ENCODE measurements at regions of chr19 and their contacts with region 1.

Region 1: DNA sequence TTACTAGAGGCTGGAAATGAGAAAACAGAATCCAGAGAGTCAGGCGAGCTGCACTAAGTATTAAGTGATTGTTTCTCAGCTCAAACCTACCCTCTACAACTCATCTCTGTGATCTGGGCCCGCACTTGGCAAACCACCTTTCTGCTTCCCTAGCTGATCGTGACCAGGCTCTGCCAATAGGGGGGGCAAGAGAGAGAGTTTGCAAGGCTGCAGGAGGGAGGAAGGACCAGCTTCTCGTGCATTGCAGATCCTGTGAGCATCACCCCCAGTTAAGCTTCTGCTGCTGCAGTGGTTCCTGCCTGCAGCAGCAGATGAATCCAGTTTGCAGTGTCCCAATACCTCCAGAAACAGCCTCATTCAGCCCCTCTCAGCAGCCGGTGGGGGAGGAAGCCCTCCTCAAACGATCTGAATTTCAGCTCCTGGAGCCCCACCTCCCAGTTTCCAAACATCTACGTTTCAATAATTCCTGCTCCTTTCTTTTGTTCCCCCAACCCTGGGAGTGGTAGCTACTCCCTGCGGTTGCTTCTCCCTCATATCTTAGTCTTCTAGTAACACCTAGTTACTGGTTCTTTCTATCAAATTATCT is 20.0 kb downstream of the XRCC1 start:
- DNase-seq: peak; percentile 75
- H3K4me3 Mint-ChIP-seq: no peak overlapping the region
- H3K27ac Mint-ChIP-seq: peak overlapping the region; percentile 18
- H3K4me1 Mint-ChIP-seq: peaks cover 9% of the 10 kb centered on the region
- H3K27me3 Mint-ChIP-seq: no peaks in the 10 kb centered on the region

Region 2: DNA sequence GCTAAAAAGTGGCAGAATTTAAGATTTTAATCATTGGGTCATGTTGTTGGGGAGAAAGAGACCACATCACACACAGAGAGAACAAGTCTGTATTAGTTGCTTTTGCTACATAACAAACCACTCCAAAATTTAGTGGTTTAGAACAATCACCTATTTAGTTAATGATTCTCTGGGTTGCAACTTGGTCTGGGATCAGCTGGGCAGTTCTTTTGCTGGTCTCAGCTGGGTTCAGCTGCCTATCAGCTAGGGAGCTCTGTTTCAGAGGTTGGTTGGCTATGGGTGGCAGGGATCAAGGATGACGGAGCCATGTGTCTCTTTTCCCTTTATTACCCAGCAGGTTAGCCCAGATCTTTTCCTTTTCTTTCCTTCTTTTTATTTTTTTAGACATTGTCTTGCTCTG is 29.2 kb after region 1 on chr19:
- intact Hi-C with region 1: no loop called
- DNase-seq: no peak
- H3K4me3 Mint-ChIP-seq: no peak overlapping the region
- H3K27ac Mint-ChIP-seq: peak overlapping the region; percentile 63
- H3K4me1 Mint-ChIP-seq: peaks cover 28% of the 10 kb centered on the region
- H3K27me3 Mint-ChIP-seq: no peaks in the 10 kb centered on the region

Region 3: DNA sequence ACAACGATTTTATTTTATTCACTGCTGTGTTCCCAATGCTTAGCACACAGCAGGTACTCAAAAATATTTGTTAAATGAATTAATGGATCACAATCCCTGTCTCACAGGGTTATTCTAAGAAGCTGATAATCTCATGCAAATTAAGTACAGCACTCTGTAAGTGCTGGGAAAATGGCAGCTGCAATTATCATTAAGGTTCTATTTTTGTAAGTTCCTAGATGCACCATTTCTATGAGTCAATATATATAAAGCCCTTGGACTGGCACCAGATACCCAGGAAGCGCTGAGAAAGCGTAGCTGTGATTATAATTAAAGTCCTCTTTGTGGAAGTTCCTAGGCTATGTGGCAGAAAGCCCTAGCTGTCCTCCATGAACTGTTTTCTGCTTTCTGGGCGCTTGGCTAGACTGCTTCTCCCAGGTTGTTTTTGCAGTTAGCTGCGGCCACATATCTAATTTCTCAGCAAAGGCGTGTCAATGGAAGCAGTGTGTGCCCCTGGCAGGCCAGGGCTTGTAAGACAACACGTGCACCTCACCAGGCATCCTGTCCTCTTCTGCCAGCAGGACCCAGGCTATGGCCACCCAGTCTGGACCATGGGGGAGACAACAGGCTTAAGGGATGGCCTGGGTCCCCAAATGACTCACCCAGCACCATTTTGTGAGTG is 51.4 kb after region 1 on chr19:
- intact Hi-C with region 1: no loop called
- DNase-seq: no peak
- H3K4me3 Mint-ChIP-seq: no peak overlapping the region
- H3K27ac Mint-ChIP-seq: no peak overlapping the region
- H3K4me1 Mint-ChIP-seq: peaks cover 3% of the 10 kb centered on the region
- H3K27me3 Mint-ChIP-seq: no peaks in the 10 kb centered on the region

Region 4: DNA sequence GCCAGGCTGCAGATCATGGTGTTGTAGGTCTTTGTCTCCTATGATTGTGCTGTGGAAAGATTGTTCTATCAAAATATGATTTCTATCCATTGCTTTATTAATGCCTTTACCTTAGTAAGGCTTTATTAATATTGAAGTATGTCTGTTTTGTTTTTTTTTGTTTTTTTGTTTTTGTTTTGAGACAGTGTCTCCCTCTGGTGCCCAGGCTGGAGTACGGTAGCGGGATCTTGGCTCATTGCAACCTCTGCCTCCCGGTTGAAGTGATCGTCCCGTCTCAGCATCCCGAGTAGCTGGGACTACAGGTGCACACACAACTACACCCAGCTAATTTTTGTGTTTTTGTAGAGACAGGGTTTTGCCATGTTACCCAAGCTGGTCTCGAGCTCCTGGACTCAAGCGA is 168.3 kb after region 1 on chr19:
- intact Hi-C with region 1: loop called (anchors 10 kb)
- DNase-seq: no peak
- H3K4me3 Mint-ChIP-seq: no peak overlapping the region
- H3K27ac Mint-ChIP-seq: no peak overlapping the region
- H3K4me1 Mint-ChIP-seq: peaks cover 4% of the 10 kb centered on the region
- H3K27me3 Mint-ChIP-seq: no peaks in the 10 kb centered on the region

Measured in activated T-helper 1 cell treated with anti-CD3 and anti-CD28 coated beads, Interleukin-12 subunit alpha, Interleukin-12 subunit beta, Interleukin-2, Interleukin-4 antibody, amounts not matched to agents 30 ng/mL and 10 ng/mL and 1 ng/mL, durations not matched to agents 14 hours and 24 hours and 36 hours (primary cell).